WTC11 (cell line): ENCODE measurements at regions of chr20 and their contacts with region 1.

Region 1: GRCh38 chr20:44115762-44116644 is 71.0 kb downstream of the JPH2 start:
- DNase-seq: no peak
- ATAC-seq: no peak
- H3K4me3 Mint-ChIP-seq: no peak overlapping the region
- H3K27ac Mint-ChIP-seq: no peak overlapping the region
- H3K4me1 Mint-ChIP-seq: 0 out of 2 replicates have a peak, but pooled peaks cover 5% of the 10 kb centered on the region
- H3K27me3 Mint-ChIP-seq: no peaks in the 10 kb centered on the region; the same call in 1 of the 2 replicates
- CTCF ChIP-seq: no peak

Region 2: GRCh38 chr20:44137210-44137801 is 21.3 kb after region 1 on chr20:
- CTCF ChIA-PET with region 1: interaction called, 29 read pairs
- POLR2A ChIA-PET with region 1: interaction called, 3 read pairs
- DNase-seq: peak; percentile 52
- ATAC-seq: peak; percentile 70
- H3K4me3 Mint-ChIP-seq: no peak overlapping the region
- H3K27ac Mint-ChIP-seq: no peak overlapping the region
- H3K4me1 Mint-ChIP-seq: peaks cover 8% of the 10 kb centered on the region; the same call in 1 of the 2 replicates
- H3K27me3 Mint-ChIP-seq: no peaks in the 10 kb centered on the region
- CTCF ChIP-seq: no peak

Region 3: DNA sequence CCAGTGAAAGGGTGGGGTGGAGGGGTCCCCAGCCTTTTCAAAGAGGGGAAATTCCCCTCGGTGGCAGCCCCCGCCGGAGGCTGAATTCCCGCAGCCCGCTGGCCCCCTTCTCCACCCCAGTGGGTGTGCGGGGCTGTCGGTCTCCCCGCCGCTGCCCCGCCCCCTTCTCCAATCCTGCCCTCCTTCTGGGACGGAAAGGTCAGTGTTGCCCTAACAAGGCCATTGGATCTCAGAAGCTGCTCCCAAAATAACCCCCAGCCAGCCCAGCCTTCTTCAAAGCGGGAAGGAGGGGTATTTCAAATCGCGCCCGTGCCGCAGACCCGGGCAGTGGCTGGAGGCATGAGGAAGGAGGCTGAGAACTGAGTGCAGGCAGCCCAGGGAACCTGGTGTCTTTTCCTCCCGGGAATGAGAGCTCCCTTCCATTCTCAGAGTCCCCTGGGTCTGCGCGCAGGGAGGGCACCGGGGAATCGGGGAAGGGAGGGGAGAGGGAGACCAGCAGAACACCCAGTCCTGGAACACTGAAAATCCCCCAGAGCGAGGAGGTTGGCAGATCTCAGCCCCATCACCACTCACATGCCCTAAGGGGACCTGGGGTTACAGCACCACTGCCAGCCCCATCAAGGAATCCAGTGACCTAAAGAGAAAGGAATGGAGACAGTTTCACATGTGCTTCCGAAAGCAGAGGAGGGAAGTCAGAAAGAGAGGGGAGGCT is 71.2 kb after region 1 on chr20 and contains the start of gene JPH2:
- CTCF ChIA-PET with region 1: interaction called, 368 read pairs
- POLR2A ChIA-PET with region 1: interaction called, 7 read pairs
- DNase-seq: peak; percentile 74
- ATAC-seq: peak; percentile 75
- H3K4me3 Mint-ChIP-seq: peak within 1 kb of the TSS; percentile 71
- H3K27ac Mint-ChIP-seq: no peak within 1 kb of the TSS
- H3K4me1 Mint-ChIP-seq: peaks cover 9% of the 10 kb centered on the region
- H3K27me3 Mint-ChIP-seq: no peaks in the 10 kb centered on the region; the same call in none of the 2 replicates
- CTCF ChIP-seq: no peak
- total RNA-seq, gene JPH2: 0.81 to 1.1 TPM (median 0.94 TPM) in 3 replicates

Region 4: GRCh38 chr20:44217342-44218092 is 101.5 kb after region 1 on chr20:
- CTCF ChIA-PET with region 1: interaction called, 19 read pairs
- POLR2A ChIA-PET with region 1: interaction called, 5 read pairs
- DNase-seq: peak; percentile 82
- ATAC-seq: peak; percentile 84
- H3K4me3 Mint-ChIP-seq: no peak overlapping the region
- H3K27ac Mint-ChIP-seq: peak overlapping the region; percentile 58; the same call in 1 of the 2 replicates
- H3K4me1 Mint-ChIP-seq: peaks cover 21% of the 10 kb centered on the region
- H3K27me3 Mint-ChIP-seq: no peaks in the 10 kb centered on the region
- CTCF ChIP-seq: peak; percentile 91

Region 5: GRCh38 chr20:44247586-44248409 is 131.8 kb after region 1 on chr20:
- CTCF ChIA-PET with region 1: interaction called, 11 read pairs
- POLR2A ChIA-PET with region 1: no interaction called
- DNase-seq: peak; percentile 91
- ATAC-seq: peak; percentile 92
- H3K4me3 Mint-ChIP-seq: peak overlapping the region; percentile 78
- H3K27ac Mint-ChIP-seq: no peak overlapping the region
- H3K4me1 Mint-ChIP-seq: peaks cover 7% of the 10 kb centered on the region; the same call in 1 of the 2 replicates
- H3K27me3 Mint-ChIP-seq: peaks cover 13% of the 10 kb centered on the region
- CTCF ChIP-seq: peak; percentile 55; the same call in 1 of the 2 replicates